Activated CD4-positive, alpha-beta T cell treated with anti-CD3 and anti-CD28 coated beads, Interleukin-2, amount 10 ng/mL, durations not matched to agents 24 days and 14 days (primary cell): ENCODE measurements at regions of chr7 and their contacts with region 1.

Region 1: GRCh38 chr7:76359111-76359978 is 554 bp upstream of the YWHAG start:
- DNase-seq: peak; percentile 98
- H3K4me3 Mint-ChIP-seq: peak overlapping the region; percentile 95
- H3K27ac Mint-ChIP-seq: peak overlapping the region; percentile 98
- H3K4me1 Mint-ChIP-seq: peaks cover 40% of the 10 kb centered on the region
- H3K27me3 Mint-ChIP-seq: no peaks in the 10 kb centered on the region

Region 2: GRCh38 chr7:76054128-76055120 is 304.9 kb before region 1 on chr7:
- intact Hi-C with region 1: loop called (anchors 10 kb)
- DNase-seq: no peak
- H3K4me3 Mint-ChIP-seq: no peak overlapping the region
- H3K27ac Mint-ChIP-seq: no peak overlapping the region
- H3K4me1 Mint-ChIP-seq: peaks cover 20% of the 10 kb centered on the region
- H3K27me3 Mint-ChIP-seq: no peaks in the 10 kb centered on the region

Region 3: GRCh38 chr7:76291343-76292212 is 67.8 kb before region 1 on chr7:
- intact Hi-C with region 1: loop called (anchors 2 kb)
- DNase-seq: peak; percentile 97
- H3K4me3 Mint-ChIP-seq: peak overlapping the region; percentile 33
- H3K27ac Mint-ChIP-seq: peak overlapping the region; percentile 77
- H3K4me1 Mint-ChIP-seq: peaks cover 16% of the 10 kb centered on the region
- H3K27me3 Mint-ChIP-seq: no peaks in the 10 kb centered on the region

Region 4: GRCh38 chr7:76327610-76328009 is 31.7 kb before region 1 on chr7:
- intact Hi-C with region 1: loop called (anchors 2 kb)
- DNase-seq: no peak
- H3K4me3 Mint-ChIP-seq: no peak overlapping the region
- H3K27ac Mint-ChIP-seq: peak overlapping the region; percentile 49
- H3K4me1 Mint-ChIP-seq: peaks cover 18% of the 10 kb centered on the region
- H3K27me3 Mint-ChIP-seq: no peaks in the 10 kb centered on the region

Region 5: DNA sequence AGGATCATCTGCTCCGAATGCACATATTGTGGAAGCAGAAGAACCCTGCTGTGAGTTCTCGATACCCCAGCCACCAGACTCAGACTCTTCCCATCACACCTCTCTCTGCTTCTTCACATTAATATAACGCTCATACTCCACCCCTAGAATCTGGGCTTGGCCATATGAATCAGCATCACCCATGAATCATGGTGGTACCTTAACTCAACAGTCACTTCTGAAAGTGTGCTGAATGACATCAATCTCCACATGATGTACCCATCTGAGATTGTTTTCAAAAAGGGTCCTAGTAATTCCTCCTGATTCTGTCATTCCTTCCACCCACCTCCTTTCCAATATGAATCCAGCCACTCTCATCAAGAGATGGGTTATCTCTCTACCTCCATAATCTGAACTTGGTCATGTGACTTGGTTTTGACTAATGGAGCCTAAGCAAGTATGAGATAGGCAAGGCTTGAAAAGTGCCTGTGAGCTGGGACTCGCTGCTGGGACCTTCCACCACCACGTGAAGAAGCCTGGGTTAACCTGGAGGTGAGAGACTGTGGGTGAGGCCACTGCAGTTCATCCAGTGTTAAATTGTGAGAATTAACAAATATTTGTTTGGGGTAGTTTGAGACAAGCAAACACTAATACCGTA is 15.9 kb before region 1 on chr7:
- intact Hi-C with region 1: loop called (anchors 1 kb)
- DNase-seq: no peak
- H3K4me3 Mint-ChIP-seq: no peak overlapping the region
- H3K27ac Mint-ChIP-seq: peak overlapping the region; percentile 7
- H3K4me1 Mint-ChIP-seq: peaks cover 58% of the 10 kb centered on the region
- H3K27me3 Mint-ChIP-seq: no peaks in the 10 kb centered on the region

Region 6: DNA sequence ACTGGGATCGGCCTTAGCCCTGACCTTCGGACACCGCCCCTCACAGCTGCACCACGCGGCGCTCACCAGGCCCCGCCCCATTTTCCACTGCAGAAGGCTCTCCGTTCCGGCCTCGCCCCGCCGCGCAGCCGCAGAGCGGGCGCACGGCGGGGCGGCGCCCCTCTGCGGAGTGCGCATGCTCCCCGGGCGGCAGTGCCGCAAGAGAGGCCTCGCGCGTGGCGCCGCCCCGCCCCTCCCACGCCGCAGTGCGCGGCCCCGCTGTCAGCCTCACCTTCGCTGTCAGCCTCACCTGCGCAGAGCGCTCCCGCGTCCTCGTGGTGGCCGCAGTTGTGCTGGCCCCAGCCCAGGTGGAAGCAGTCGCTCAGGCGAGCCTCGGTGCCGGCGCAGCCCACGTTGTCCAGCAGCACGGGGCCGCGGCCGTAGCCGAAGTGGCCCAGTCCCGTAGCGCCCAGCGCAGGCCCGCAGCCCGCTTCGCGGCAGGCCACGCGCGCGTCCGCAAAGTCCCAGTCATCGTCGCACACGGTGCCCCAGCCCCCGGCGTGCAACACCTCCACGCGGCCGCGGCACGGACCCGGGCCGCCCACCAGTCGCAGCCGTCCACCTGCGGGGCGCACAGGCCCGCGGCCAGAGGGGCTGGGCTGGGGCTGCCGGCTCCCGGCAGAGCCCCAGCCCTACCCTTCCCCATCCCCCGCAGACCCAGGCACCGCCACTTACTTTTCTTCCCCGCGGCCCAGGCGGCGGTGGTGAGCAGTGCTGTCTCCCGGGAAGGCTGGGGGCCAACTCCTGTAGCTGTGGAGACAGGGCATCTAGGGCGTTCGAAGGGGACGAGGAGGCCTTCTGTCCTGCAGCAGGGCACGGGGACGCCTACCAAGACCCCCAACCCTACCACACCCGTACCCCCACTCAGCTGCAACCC is 34.0 kb after region 1 on chr7:
- intact Hi-C with region 1: loop called (anchors 1 kb)
- DNase-seq: peak; percentile 98
- H3K4me3 Mint-ChIP-seq: peak overlapping the region; percentile 90
- H3K27ac Mint-ChIP-seq: peak overlapping the region; percentile 99
- H3K4me1 Mint-ChIP-seq: peaks cover 25% of the 10 kb centered on the region
- H3K27me3 Mint-ChIP-seq: no peaks in the 10 kb centered on the region